GM18951 (cell line): ENCODE measurements at regions of chr9 and their contacts with region 1.

Region 1: GRCh38 chr9:126939821-126940221 is 25.2 kb downstream of the RALGPS1 start:
- POLR2A ChIP-seq: no peak

Region 2: GRCh38 chr9:127202461-127203169 is 262.8 kb after region 1 on chr9:
- in situ Hi-C with region 1: loop called (anchors 5 kb)
- POLR2A ChIP-seq: no peak